ENCODE measurements at regions of chrX and their contacts with region 1.

Region 1: DNA sequence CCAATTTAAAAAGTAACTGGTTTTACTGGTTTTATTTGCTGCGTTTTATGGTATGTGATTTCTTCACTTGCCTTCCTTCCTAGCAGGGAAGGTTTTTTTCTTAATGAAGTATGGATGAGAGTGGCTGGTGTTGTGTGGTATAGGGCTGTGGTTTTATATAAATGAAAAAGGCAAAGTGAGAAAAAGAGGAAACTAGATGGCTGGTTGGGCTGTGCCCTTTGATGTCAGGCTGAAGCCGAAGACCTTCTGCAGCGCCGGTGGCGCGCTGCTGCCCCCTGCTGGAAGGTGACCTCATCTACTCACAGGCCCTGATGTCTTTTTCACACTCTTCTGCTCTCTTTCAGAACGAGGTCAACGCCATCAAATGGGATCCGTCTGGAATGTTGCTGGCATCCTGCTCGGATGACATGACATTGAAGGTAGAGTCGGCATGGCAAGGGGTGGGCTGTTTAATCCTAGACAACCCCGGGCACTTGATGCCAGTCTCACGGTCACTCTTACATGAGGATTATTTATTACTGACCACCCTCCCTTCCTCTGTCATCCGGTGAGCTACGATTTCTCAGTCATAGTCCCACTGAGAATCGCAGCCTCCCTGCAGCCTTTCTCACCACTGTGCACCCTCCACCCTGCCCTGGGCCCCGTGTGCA is 56.6 kb downstream of the GPR143 start:
- DNase-seq: peak; percentile 20
- H3K4me3 ChIP-seq: no peak overlapping the region
- H3K27ac ChIP-seq: no peak overlapping the region
- H3K4me1 ChIP-seq: no peaks in the 10 kb centered on the region
- H3K27me3 ChIP-seq: no peaks in the 10 kb centered on the region
- CTCF ChIP-seq: peak; percentile 64 to 77

Region 2: DNA sequence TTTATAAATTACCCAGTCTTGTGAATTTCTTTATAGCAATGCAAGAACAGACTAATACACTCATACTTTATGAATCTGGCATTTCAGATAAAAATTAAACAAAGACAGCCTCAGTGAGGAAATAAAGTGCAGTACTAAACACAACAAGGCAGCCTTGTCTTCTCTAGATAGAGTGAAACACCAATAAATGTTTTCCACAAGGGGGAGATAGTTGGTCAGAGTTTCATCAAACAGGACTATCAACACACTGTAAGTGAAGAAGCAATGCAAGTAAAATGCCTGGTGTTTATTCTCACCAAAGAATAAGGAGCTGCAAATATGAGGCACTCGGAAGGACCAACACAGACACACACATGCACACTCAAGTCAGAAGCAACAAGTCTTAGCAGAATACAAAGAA is 737.9 kb before region 1 on chrX:
- CTCF ChIA-PET with region 1: no interaction called
- dilution Hi-C with region 1: no loop called
- in situ Hi-C with region 1: no loop called
- intact Hi-C with region 1: loop called (anchors 1 kb)
- DNase-seq: peak; percentile 17
- H3K4me3 ChIP-seq: no peak overlapping the region
- H3K27ac ChIP-seq: no peak overlapping the region
- H3K4me1 ChIP-seq: no peaks in the 10 kb centered on the region
- H3K27me3 ChIP-seq: no peaks in the 10 kb centered on the region
- CTCF ChIP-seq: peak; percentile 24 to 39

Region 3: DNA sequence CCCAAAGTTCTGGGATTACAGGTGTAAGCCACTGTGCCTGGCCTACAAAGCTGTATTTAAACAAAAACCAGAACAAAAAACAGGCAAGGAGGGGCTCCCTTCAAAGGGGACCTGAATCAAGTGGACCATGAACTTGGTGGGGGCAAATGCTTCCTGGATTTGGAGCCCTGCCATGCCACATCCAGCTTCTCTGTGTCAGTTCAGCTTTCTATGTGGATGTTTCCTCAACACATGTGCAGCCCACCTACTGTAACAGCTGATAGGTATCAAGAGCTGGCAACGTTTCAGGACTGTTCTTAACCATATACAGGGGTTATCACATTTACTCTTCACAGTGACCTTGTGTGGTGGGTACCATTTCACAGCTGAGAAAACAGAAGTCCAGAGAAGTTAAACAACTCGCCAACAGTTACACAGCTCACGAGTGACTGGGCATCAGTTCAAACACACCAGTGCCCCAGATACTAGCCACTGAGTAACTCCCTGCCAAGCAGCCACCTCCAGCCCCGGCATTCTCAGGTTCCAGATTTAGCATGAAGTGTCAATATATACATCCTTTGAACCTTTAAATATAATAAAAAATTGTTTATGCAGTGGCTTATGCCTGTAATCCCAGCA is 49.1 kb after region 1 on chrX:
- CTCF ChIA-PET with region 1: no interaction called
- dilution Hi-C with region 1: no loop called
- in situ Hi-C with region 1: no loop called
- intact Hi-C with region 1: no loop called
- DNase-seq: no peak
- H3K4me3 ChIP-seq: no peak overlapping the region
- H3K27ac ChIP-seq: no peak overlapping the region
- H3K4me1 ChIP-seq: no peaks in the 10 kb centered on the region
- H3K27me3 ChIP-seq: no peaks in the 10 kb centered on the region
- CTCF ChIP-seq: no peak

Measured in mammary epithelial cell (primary cell).